ENCODE measurements at regions of chr4 and their contacts with region 1.

Region 1: GRCh38 chr4:143692241-143692640 is 8.2 kb downstream of the FREM3 start:
- DNase-seq: no peak
- ATAC-seq: no peak
- H3K4me3 ChIP-seq: no peak overlapping the region
- H3K4me3 Mint-ChIP-seq: no peak overlapping the region
- H3K27ac ChIP-seq: no peak overlapping the region
- H3K27ac Mint-ChIP-seq: no peak overlapping the region
- H3K4me1 ChIP-seq: no peaks in the 10 kb centered on the region
- H3K4me1 Mint-ChIP-seq: no peaks in the 10 kb centered on the region
- H3K27me3 ChIP-seq: no peaks in the 10 kb centered on the region
- H3K27me3 Mint-ChIP-seq: peaks cover 7% of the 10 kb centered on the region
- CTCF ChIP-seq: no peak

Region 2: GRCh38 chr4:143679434-143679833 is 12.8 kb before region 1 on chr4:
- CTCF ChIA-PET with region 1: no interaction called
- POLR2A ChIA-PET with region 1: no interaction called
- intact Hi-C with region 1: no loop called
- DNase-seq: no peak
- ATAC-seq: no peak
- H3K4me3 ChIP-seq: no peak overlapping the region
- H3K4me3 Mint-ChIP-seq: no peak overlapping the region
- H3K27ac ChIP-seq: no peak overlapping the region
- H3K27ac Mint-ChIP-seq: no peak overlapping the region
- H3K4me1 ChIP-seq: no peaks in the 10 kb centered on the region
- H3K4me1 Mint-ChIP-seq: no peaks in the 10 kb centered on the region
- H3K27me3 ChIP-seq: no peaks in the 10 kb centered on the region
- H3K27me3 Mint-ChIP-seq: peaks cover 2% of the 10 kb centered on the region
- CTCF ChIP-seq: no peak

Region 3: DNA sequence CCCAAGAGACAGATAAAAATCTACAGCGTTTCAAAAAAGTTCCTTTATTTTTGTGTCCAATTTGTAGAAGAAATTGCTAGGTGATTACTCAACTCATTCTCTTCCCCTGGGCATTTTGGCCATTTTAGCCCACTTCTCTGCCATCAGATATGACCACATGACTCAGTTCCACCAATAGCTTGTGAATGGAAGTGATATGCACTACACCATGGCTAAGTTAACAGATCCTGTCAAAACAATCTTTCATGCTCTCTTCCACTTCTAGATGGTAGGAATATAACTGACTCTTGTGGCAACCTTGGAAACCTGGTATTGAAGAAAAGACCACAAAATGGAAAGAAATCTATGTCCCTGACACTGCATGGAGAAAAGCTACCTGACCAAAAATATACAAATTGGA is 34.5 kb after region 1 on chr4:
- CTCF ChIA-PET with region 1: no interaction called
- POLR2A ChIA-PET with region 1: no interaction called
- intact Hi-C with region 1: loop called in 1 of 2 experiments (anchors 1 kb)
- DNase-seq: no peak
- ATAC-seq: no peak
- H3K4me3 ChIP-seq: no peak overlapping the region
- H3K4me3 Mint-ChIP-seq: no peak overlapping the region
- H3K27ac ChIP-seq: no peak overlapping the region
- H3K27ac Mint-ChIP-seq: no peak overlapping the region
- H3K4me1 ChIP-seq: no peaks in the 10 kb centered on the region
- H3K4me1 Mint-ChIP-seq: no peaks in the 10 kb centered on the region
- H3K27me3 ChIP-seq: no peaks in the 10 kb centered on the region
- H3K27me3 Mint-ChIP-seq: no peaks in the 10 kb centered on the region
- CTCF ChIP-seq: no peak